Sigmoid colon (tissue), 7 donors: ENCODE measurements at regions of chr6 and their contacts with region 1.

Region 1: GRCh38 chr6:75266716-75267291 is 17.8 kb downstream of the TMEM30A start:
- DNase-seq: no peak
- H3K4me3 ChIP-seq: no peak overlapping the region
- H3K27ac ChIP-seq: peak overlapping the region in 1 of 4 donors; percentile 52
- H3K4me1 ChIP-seq: peaks cover 0 to 40% (median 22%) of the 10 kb centered on the region in 4 donors
- H3K27me3 ChIP-seq: no peaks in the 10 kb centered on the region
- CTCF ChIP-seq: peak; percentile 55 to 82 (median 73)
- EP300 ChIP-seq: no peak
- POLR2A ChIP-seq: no peak

Region 2: DNA sequence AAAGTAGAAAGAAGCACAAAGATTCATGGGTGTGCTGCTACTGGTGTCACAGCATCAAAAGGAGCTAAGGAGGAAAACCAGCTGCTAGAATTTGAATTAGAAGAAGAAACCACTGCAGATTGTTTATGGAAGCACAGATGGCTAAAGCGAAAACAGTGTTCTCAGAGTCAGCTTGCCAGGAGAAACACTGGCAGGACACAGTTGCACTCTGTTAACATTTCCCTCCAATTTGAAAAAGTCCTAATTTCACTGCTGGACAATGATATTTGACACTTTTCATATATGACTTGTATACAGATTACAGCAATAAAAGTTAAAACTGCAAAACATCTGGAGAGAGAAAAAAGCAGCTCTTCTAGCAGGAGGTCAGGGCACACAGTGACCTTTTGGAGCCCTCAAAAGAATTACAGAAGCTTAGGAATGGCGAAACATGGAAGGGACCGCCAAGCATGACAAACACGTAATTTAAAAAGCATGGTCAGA is 375.4 kb before region 1 on chr6:
- intact Hi-C with region 1: no loop called
- DNase-seq: peak; percentile 82
- H3K4me3 ChIP-seq: no peak overlapping the region
- H3K27ac ChIP-seq: peak overlapping the region; percentile 6 to 54 (median 24)
- H3K4me1 ChIP-seq: peaks cover 0 to 17% (median 7%) of the 10 kb centered on the region in 4 donors
- H3K27me3 ChIP-seq: no peaks in the 10 kb centered on the region
- CTCF ChIP-seq: no peak
- EP300 ChIP-seq: no peak
- POLR2A ChIP-seq: no peak

Region 3: GRCh38 chr6:75349262-75349984 is 82.6 kb after region 1 on chr6:
- intact Hi-C with region 1: loop called (anchors 5 kb)
- DNase-seq: no peak
- H3K4me3 ChIP-seq: peak overlapping the region; percentile 6 to 41 (median 34)
- H3K27ac ChIP-seq: peak overlapping the region; percentile 49 to 84 (median 74)
- H3K4me1 ChIP-seq: peaks cover 0 to 41% (median 28%) of the 10 kb centered on the region in 4 donors
- H3K27me3 ChIP-seq: no peaks in the 10 kb centered on the region
- CTCF ChIP-seq: peak in 1 of 4 experiments; percentile 24
- EP300 ChIP-seq: no peak
- POLR2A ChIP-seq: no peak